PC-3 (cell line): ENCODE measurements at regions of chr12 and their contacts with region 1.

Region 1: GRCh38 chr12:73266206-73266605 is 994.0 kb downstream of the TRHDE start:
- DNase-seq: no peak
- ATAC-seq: no peak
- H3K4me3 ChIP-seq: no peak overlapping the region
- H3K27ac ChIP-seq: no peak overlapping the region
- H3K4me1 ChIP-seq: no peaks in the 10 kb centered on the region
- H3K27me3 ChIP-seq: no peaks in the 10 kb centered on the region
- CTCF ChIP-seq: no peak

Region 2: GRCh38 chr12:73124480-73124879 is 141.7 kb before region 1 on chr12:
- CTCF ChIA-PET with region 1: no interaction called
- POLR2A ChIA-PET with region 1: no interaction called
- intact Hi-C with region 1: no loop called
- DNase-seq: no peak
- ATAC-seq: no peak
- H3K4me3 ChIP-seq: no peak overlapping the region
- H3K27ac ChIP-seq: no peak overlapping the region
- H3K4me1 ChIP-seq: no peaks in the 10 kb centered on the region
- H3K27me3 ChIP-seq: no peaks in the 10 kb centered on the region
- CTCF ChIP-seq: no peak

Region 3: DNA sequence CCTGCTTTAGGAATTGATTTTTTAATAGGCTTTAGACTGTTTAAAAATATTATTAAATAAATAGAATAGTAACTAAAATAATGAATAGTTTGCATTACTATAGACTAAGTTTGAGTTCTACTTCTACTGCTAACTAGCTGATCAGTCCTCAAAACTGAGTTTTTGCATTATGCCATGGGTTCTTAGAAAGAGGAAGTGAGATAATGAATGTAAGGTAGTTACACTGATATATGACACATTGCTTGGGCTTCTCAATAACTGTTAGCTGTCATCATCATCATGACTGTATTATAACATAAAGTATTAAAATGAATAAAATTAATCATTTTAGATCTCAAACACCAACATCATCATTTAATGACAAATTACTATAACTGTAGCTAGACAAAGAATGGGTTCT is 44.4 kb before region 1 on chr12:
- CTCF ChIA-PET with region 1: no interaction called
- POLR2A ChIA-PET with region 1: no interaction called
- intact Hi-C with region 1: loop called (anchors 2 kb)
- DNase-seq: no peak
- ATAC-seq: no peak
- H3K4me3 ChIP-seq: no peak overlapping the region
- H3K27ac ChIP-seq: no peak overlapping the region
- H3K4me1 ChIP-seq: no peaks in the 10 kb centered on the region
- H3K27me3 ChIP-seq: no peaks in the 10 kb centered on the region
- CTCF ChIP-seq: no peak

Region 4: GRCh38 chr12:73240110-73240509 is 26.1 kb before region 1 on chr12:
- CTCF ChIA-PET with region 1: no interaction called
- POLR2A ChIA-PET with region 1: no interaction called
- intact Hi-C with region 1: no loop called
- DNase-seq: no peak
- ATAC-seq: no peak
- H3K4me3 ChIP-seq: no peak overlapping the region
- H3K27ac ChIP-seq: no peak overlapping the region
- H3K4me1 ChIP-seq: no peaks in the 10 kb centered on the region
- H3K27me3 ChIP-seq: no peaks in the 10 kb centered on the region
- CTCF ChIP-seq: no peak

Region 5: GRCh38 chr12:74015118-74015517 is 748.9 kb after region 1 on chr12:
- CTCF ChIA-PET with region 1: no interaction called
- POLR2A ChIA-PET with region 1: no interaction called
- intact Hi-C with region 1: no loop called
- DNase-seq: no peak
- ATAC-seq: no peak
- H3K4me3 ChIP-seq: no peak overlapping the region
- H3K27ac ChIP-seq: no peak overlapping the region
- H3K4me1 ChIP-seq: no peaks in the 10 kb centered on the region
- H3K27me3 ChIP-seq: no peaks in the 10 kb centered on the region
- CTCF ChIP-seq: no peak